ENCODE measurements at regions of chr4 and their contacts with region 1.

Region 1: DNA sequence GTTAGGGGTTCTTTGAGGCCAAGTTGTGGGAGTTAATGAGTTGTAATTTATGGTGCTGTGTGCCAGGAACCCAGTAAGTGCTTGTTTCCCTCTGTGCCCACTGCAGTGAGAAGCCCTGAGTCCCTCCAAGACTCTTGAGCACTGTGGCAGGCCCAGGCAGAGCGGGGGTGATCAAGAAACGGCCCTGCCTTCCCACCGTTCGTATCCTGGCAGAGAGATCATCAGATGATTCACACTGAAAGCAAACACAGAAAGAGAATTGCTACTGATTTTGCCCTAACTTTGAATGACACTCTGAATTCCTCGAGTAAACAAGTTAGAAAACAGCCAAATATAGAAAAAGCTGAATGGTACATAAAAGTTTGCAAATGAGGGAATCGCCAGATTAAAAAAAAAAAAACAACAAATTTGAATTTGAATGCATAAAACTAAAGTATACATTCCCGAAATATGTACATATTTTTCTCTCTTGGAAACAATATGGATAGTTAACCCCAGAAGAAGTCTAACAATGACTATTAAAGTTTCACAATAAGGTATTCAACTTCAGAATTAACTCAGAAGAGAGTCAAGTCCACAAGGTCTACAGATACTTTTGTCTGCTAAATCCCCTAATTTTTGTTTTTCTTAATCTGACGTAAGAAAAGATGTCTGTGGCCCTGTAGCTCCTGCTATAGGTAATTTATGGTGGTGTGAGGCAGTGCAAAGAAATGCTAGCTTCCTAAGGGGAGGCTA is 71.8 kb downstream of the AFAP1 start:
- DNase-seq: no peak
- H3K4me3 Mint-ChIP-seq: no peak overlapping the region
- H3K27ac Mint-ChIP-seq: no peak overlapping the region
- H3K4me1 Mint-ChIP-seq: peaks cover 15% of the 10 kb centered on the region
- H3K27me3 Mint-ChIP-seq: no peaks in the 10 kb centered on the region
- CTCF ChIP-seq: no peak

Region 2: DNA sequence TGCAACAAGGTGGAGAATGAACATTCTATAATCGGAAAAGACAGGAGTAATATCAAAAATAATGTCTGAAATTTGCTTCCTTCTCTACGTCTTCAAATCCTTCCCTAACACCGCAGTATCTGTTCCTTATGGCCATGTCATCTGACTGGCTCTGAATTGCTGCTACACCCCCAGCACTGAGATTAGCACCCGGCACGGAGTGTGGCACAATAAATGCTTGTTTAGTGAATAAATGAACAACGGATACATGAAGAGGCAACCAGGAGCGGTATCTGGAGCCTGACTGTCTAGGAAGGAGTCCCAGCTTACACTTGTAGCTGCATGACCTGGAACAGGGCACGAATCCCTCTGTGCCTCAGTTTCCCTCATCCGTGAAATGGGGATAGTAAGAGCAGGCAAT is 92.5 kb before region 1 on chr4:
- CTCF ChIA-PET with region 1: interaction called, 11 read pairs
- intact Hi-C with region 1: no loop called
- DNase-seq: no peak
- H3K4me3 Mint-ChIP-seq: no peak overlapping the region
- H3K27ac Mint-ChIP-seq: no peak overlapping the region
- H3K4me1 Mint-ChIP-seq: peaks cover 2% of the 10 kb centered on the region
- H3K27me3 Mint-ChIP-seq: no peaks in the 10 kb centered on the region
- CTCF ChIP-seq: no peak

Measured in Calu3 (cell line).